ENCODE measurements at regions of chr7 and their contacts with region 1.

Region 1: GRCh38 chr7:44439926-44440325 is 50.5 kb downstream of the NUDCD3 start:
- DNase-seq: no peak
- H3K4me3 ChIP-seq: no peak overlapping the region
- H3K27ac ChIP-seq: no peak overlapping the region
- H3K4me1 ChIP-seq: no peaks in the 10 kb centered on the region
- H3K27me3 ChIP-seq: no peaks in the 10 kb centered on the region
- CTCF ChIP-seq: no peak

Region 2: GRCh38 chr7:44229546-44230105 is 210.3 kb before region 1 on chr7:
- CTCF ChIA-PET with region 1: interaction called, 11 read pairs
- POLR2A ChIA-PET with region 1: no interaction called
- intact Hi-C with region 1: no loop called
- DNase-seq: no peak
- H3K4me3 ChIP-seq: no peak overlapping the region
- H3K27ac ChIP-seq: no peak overlapping the region
- H3K4me1 ChIP-seq: no peaks in the 10 kb centered on the region
- H3K27me3 ChIP-seq: peaks cover 53% of the 10 kb centered on the region
- CTCF ChIP-seq: no peak

Region 3: DNA sequence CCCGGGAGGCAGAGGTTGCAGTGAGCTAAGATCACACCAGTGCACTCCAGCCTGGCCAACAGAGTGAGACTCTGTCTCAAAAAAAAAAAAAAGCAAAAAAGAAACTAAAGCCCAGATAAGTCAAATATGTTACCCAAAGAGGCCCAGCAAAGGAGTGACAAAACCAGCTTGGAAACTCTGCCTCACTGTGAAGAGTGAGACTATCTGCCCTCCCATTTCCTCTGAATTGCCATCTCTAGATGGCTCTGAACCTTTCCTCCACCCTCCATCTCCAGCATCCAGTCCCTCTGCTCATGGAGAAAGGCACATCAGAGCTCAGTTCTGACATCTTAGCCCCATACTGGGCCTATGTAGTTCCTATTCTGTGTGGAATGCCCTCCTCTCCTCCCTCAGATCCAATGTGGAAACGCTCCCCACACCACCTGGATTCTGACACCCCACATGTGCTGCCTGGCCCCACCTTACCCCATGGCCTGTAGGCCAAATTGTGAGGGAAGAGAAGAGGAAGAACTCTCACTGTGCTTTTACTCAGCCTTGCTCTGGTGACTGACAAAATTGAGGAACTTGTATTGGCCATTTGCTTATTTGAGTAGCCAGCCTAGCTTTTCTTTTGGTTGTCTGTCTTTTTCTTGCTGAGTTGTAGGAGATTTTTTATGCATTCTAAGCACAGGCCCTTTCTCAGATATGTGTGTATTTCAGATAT is 68.6 kb after region 1 on chr7:
- CTCF ChIA-PET with region 1: no interaction called
- POLR2A ChIA-PET with region 1: no interaction called
- intact Hi-C with region 1: no loop called
- DNase-seq: no peak
- H3K4me3 ChIP-seq: no peak overlapping the region
- H3K27ac ChIP-seq: no peak overlapping the region
- H3K4me1 ChIP-seq: no peaks in the 10 kb centered on the region
- H3K27me3 ChIP-seq: no peaks in the 10 kb centered on the region
- CTCF ChIP-seq: no peak

Region 4: GRCh38 chr7:44814919-44815318 is 375.0 kb after region 1 on chr7:
- CTCF ChIA-PET with region 1: no interaction called
- POLR2A ChIA-PET with region 1: no interaction called
- intact Hi-C with region 1: no loop called
- DNase-seq: no peak
- H3K4me3 ChIP-seq: no peak overlapping the region
- H3K27ac ChIP-seq: no peak overlapping the region
- H3K4me1 ChIP-seq: peaks cover 29% of the 10 kb centered on the region
- H3K27me3 ChIP-seq: no peaks in the 10 kb centered on the region
- CTCF ChIP-seq: no peak

Measured in PC-9 (cell line).